ENCODE measurements at regions of chr11 and their contacts with region 1.

Region 1: GRCh38 chr11:57751676-57752253 is at the start of gene BTBD18:
- DNase-seq: peak; percentile 34
- ATAC-seq: peak; percentile 60
- H3K4me3 ChIP-seq: no peak within 1 kb of the TSS
- H3K4me3 Mint-ChIP-seq: no peak within 1 kb of the TSS
- H3K27ac ChIP-seq: no peak within 1 kb of the TSS
- H3K27ac Mint-ChIP-seq: peak within 1 kb of the TSS; percentile 77
- H3K4me1 ChIP-seq: no peaks in the 10 kb centered on the region
- H3K4me1 Mint-ChIP-seq: peaks cover 11% of the 10 kb centered on the region
- H3K27me3 ChIP-seq: no peaks in the 10 kb centered on the region
- H3K27me3 Mint-ChIP-seq: no peaks in the 10 kb centered on the region
- CTCF ChIP-seq: peak; percentile 44
- total RNA-seq, gene BTBD18: not detected in 2 replicates

Region 2: GRCh38 chr11:57778318-57779037 is 26.7 kb after region 1 on chr11:
- CTCF ChIA-PET with region 1: interaction called, 10 read pairs
- POLR2A ChIA-PET with region 1: interaction called, 3 read pairs
- intact Hi-C with region 1: no loop called
- DNase-seq: no peak
- ATAC-seq: no peak
- H3K4me3 ChIP-seq: no peak overlapping the region
- H3K4me3 Mint-ChIP-seq: no peak overlapping the region
- H3K27ac ChIP-seq: no peak overlapping the region
- H3K27ac Mint-ChIP-seq: no peak overlapping the region
- H3K4me1 ChIP-seq: peaks cover 14 to 22% of the 10 kb centered on the region in 2 donors
- H3K4me1 Mint-ChIP-seq: peaks cover 45% of the 10 kb centered on the region
- H3K27me3 ChIP-seq: no peaks in the 10 kb centered on the region
- H3K27me3 Mint-ChIP-seq: no peaks in the 10 kb centered on the region
- CTCF ChIP-seq: no peak